Activated CD4-positive, alpha-beta T cell treated with anti-CD3 and anti-CD28 coated beads for 36 hours (primary cell): ENCODE measurements at regions of chr4 and their contacts with region 1.

Region 1: GRCh38 chr4:140153718-140154571 is at the start of gene MAML3:
- DNase-seq: peak; percentile 90
- ATAC-seq: peak; percentile 40
- H3K4me3 Mint-ChIP-seq: peak within 1 kb of the TSS; percentile 86
- H3K27ac Mint-ChIP-seq: peak within 1 kb of the TSS; percentile 80
- H3K4me1 Mint-ChIP-seq: peaks cover 37% of the 10 kb centered on the region
- H3K27me3 Mint-ChIP-seq: peaks cover 13% of the 10 kb centered on the region
- total RNA-seq, gene MAML3: 1.6 to 1.9 TPM

Region 2: DNA sequence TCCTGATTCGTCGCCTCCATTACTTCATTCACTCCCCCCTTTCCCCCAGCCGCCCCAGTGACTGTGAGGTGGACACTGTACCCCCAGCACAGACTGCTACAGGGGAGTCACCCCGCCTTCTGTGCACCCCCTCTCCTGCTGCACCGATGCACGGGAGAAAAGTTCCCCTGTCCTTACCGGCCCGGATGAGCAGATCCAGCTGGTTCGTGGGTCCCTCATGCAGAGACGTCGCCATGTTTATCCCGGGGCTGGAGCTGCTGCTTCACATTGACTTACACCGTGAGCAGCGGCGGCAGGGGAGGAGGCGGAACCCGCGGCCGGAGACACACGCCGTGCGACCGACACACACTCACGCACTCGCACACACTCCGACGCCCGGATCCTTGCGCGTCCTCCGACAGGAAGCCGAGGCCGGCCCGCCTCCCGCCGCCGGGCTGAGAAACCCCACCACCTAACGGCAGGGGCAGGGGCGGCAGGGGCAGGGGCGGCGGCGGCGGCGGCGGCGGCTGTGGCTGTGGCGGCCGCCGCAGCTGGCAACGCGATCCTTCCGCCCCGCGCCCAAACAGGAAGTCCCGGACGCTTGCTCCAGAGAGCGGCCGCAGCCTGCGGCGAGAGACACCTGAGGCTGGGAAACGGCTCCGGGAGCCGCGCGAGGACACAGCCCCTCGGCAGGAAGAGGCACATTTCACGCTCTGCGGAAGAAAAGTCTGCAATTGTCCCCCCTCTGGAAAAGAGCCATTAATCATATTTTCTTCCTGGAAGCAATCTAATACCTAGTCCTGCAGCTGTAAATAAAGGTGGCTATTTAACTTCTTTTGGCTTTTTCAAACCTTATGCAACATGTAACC is 1069.8 kb before region 1 on chr4:
- CTCF ChIA-PET with region 1: no interaction called
- POLR2A ChIA-PET with region 1: no interaction called
- intact Hi-C with region 1: loop called in 1 of 2 experiments (anchors 2 kb)
- DNase-seq: peak; percentile 92
- ATAC-seq: peak; percentile 64
- H3K4me3 Mint-ChIP-seq: peak overlapping the region; percentile 100
- H3K27ac Mint-ChIP-seq: peak overlapping the region; percentile 99
- H3K4me1 Mint-ChIP-seq: peaks cover 30% of the 10 kb centered on the region
- H3K27me3 Mint-ChIP-seq: no peaks in the 10 kb centered on the region

Region 3: GRCh38 chr4:139651282-139652194 is 502.4 kb before region 1 on chr4:
- CTCF ChIA-PET with region 1: no interaction called
- POLR2A ChIA-PET with region 1: no interaction called
- intact Hi-C with region 1: loop called (anchors 2 to 10 kb)
- DNase-seq: peak; percentile 84
- ATAC-seq: peak; percentile 85
- H3K4me3 Mint-ChIP-seq: no peak overlapping the region
- H3K27ac Mint-ChIP-seq: peak overlapping the region; percentile 5
- H3K4me1 Mint-ChIP-seq: peaks cover 5% of the 10 kb centered on the region
- H3K27me3 Mint-ChIP-seq: no peaks in the 10 kb centered on the region

Region 4: DNA sequence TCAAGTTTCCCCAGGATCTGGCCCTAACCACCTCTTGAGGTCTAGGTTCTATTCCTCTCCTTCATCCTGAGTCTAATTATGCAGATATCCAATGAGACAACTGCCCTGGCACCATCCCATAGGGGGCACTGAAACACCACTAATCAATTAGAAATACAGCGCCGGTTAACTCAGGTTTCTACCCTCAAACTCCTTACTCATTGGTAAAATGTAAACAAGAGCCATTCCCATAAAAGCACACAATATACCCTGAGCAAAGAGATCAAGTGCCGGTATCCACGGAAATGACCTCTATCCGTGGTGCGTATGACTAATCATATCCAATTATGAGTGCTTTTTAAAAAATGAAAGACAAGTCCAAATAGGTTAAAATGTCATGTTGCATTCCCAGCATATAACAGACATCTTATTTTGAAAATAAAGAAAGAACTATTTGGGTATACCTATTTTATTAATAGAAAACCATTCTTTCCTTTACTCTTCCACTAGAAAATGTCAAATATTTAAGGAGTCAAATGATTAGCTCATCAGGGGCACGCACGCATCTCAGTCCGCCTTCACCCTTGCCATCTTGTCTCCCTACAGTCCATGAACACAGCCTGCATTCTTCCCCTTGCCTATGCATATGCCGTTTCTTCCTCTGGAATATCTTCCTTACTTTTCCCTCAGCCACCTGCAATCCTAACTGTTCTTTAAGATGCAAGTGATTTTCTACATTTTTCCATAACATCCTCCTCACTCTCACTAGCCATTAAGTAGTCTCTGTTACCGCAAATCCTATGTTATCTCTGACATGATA is 141.1 kb before region 1 on chr4:
- CTCF ChIA-PET with region 1: interaction called, 3 read pairs
- POLR2A ChIA-PET with region 1: no interaction called
- intact Hi-C with region 1: loop called (anchors 2 kb)
- DNase-seq: peak; percentile 64
- ATAC-seq: peak; percentile 73
- H3K4me3 Mint-ChIP-seq: no peak overlapping the region
- H3K27ac Mint-ChIP-seq: no peak overlapping the region
- H3K4me1 Mint-ChIP-seq: peaks cover 9% of the 10 kb centered on the region
- H3K27me3 Mint-ChIP-seq: peaks cover 5% of the 10 kb centered on the region

Region 5: GRCh38 chr4:140103676-140104075 is 50.3 kb before region 1 on chr4:
- CTCF ChIA-PET with region 1: interaction called, 3 read pairs
- POLR2A ChIA-PET with region 1: no interaction called
- intact Hi-C with region 1: loop called in 1 of 2 experiments (anchors 1 kb)
- DNase-seq: peak; percentile 75
- ATAC-seq: peak; percentile 91
- H3K4me3 Mint-ChIP-seq: no peak overlapping the region
- H3K27ac Mint-ChIP-seq: peak overlapping the region; percentile 72
- H3K4me1 Mint-ChIP-seq: peaks cover 52% of the 10 kb centered on the region
- H3K27me3 Mint-ChIP-seq: peaks cover 8% of the 10 kb centered on the region

Region 6: DNA sequence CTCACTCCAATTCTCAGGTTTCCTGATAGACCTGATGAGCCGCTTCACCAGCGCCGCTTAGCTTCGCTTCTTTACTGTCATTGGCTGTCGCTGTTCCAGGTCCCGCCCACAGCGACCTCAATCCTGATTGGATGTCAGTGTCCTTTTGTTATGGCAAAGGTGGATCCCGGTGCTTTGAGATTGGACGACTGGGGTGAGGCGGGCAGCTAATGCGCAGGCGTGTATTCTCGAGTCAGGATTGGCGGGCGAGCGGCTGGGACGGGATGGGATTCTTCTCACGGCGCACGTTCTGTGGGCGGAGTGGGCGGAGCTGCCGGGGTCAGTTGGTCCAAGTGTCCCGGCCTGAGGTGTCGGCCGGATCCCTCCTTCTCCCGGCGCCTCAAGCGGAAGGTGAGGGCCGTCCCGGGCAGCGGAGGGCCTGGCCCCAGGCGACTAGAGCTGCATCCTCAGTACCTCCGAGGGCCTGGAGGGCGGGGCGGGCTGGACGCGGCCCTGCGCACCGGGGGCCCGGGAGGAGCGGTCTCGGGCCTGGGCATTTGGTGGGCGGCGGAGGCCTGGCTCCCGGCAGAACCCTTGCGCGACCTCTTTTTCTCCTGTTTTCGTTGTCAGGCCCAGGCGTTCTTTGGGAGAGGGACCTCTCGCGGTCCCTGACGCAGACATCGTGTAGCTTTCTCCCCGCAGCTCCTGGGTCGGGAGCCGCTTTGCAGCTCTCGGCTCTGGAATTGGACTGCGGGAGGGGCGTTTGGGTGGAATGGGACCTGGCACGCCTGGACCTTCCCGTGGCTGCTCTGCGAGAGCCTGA is 219.6 kb after region 1 on chr4 and contains the start of gene SCOC:
- CTCF ChIA-PET with region 1: no interaction called
- POLR2A ChIA-PET with region 1: no interaction called
- intact Hi-C with region 1: loop called in 1 of 2 experiments (anchors 2 kb)
- DNase-seq: peak; percentile 98
- ATAC-seq: peak; percentile 98
- H3K4me3 Mint-ChIP-seq: no peak within 1 kb of the TSS
- H3K27ac Mint-ChIP-seq: peak within 1 kb of the TSS; percentile 59
- H3K4me1 Mint-ChIP-seq: peaks cover 35% of the 10 kb centered on the region
- H3K27me3 Mint-ChIP-seq: no peaks in the 10 kb centered on the region
- total RNA-seq, gene SCOC: 37.1 to 47.8 TPM

Region 7: DNA sequence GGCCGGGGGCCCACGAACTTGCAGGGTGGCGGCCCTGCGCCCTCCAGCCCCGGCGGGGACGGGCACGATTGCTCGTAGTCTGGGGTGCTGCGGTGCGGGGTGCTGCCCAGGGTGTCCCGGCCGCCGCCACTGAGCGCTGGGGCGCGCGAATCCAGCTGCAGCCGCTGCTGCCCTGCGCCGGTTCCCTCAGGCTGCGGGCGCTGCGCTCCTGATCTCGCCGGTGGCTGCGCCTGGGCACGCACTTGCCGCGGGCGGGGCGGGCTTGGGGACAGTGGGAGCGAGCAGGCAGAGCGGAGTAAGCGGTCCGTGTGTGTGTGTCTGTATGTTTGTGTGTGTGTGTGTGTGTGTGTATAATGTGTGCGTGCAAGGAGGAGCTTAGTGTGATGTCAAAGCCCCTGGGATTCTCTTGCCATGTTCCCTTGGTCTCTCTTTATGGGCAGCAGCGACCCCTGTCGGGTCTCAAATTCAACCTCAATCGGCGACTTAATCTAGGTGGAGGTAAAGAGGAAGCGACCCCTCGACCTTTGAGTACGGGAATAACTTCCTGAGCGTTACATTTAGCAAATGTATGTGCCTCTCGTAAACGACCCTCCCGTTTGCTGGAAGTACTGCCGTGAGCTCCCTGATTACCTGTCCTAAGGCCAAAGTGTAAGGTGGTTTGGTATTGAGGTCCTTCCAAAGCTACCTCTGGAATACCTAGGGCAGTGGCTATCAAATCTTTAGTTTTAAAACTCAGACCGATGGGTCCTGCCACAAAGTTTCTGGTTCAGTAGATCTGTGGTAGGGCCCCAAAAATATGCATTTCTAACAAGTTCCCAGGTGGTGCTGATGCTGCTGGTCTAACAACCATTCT is 979.4 kb after region 1 on chr4 and contains the start of gene RNF150:
- CTCF ChIA-PET with region 1: no interaction called
- POLR2A ChIA-PET with region 1: no interaction called
- intact Hi-C with region 1: no loop called
- DNase-seq: peak; percentile 80
- ATAC-seq: peak; percentile 80
- H3K4me3 Mint-ChIP-seq: peak within 1 kb of the TSS; percentile 78
- H3K27ac Mint-ChIP-seq: no peak within 1 kb of the TSS
- H3K4me1 Mint-ChIP-seq: peaks cover 14% of the 10 kb centered on the region
- H3K27me3 Mint-ChIP-seq: peaks cover 57% of the 10 kb centered on the region
- total RNA-seq, gene RNF150: 0.02 to 0.14 TPM